ENCODE measurements at regions of chr5 and their contacts with region 1.

Region 1: DNA sequence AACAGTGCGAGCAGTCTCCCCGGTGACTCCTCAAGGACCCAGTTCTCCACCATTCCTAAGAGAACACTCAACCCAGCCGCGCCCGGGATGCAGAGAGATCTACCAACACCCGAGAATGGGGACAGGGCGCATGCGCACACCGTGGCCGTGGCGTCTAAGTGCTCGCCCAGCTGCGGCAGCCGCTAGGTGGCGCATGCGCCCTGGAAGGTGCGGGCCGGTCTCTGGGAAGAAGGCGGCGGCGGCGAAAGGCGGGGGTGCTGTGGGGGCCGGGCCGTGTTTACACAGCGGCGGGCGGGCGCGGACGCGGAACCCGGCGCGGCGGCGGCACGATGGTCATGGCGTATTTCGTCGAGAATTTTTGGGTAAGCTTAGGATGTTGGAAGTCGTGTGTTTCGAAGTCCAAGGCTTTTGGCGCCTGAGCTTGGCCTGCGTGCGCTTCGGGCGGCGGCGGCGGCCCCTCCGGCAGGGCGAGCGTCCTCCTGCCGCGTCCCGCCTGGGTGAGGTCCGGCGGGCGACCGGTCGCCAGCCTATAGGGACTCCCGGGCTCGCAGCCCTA is at the start of gene FCHO2:
- DNase-seq: peak; percentile 82 to 98 (median 91)
- ATAC-seq: peak; percentile 98
- H3K4me3 ChIP-seq: peak within 1 kb of the TSS; percentile 85
- H3K4me3 Mint-ChIP-seq: peak within 1 kb of the TSS; percentile 90 to 95 (median 94)
- H3K27ac ChIP-seq: no peak within 1 kb of the TSS
- H3K27ac Mint-ChIP-seq: peak within 1 kb of the TSS; percentile 22 to 92 (median 80)
- H3K4me1 ChIP-seq: peaks cover 5 to 12% of the 10 kb centered on the region in 2 donors
- H3K4me1 Mint-ChIP-seq: peaks cover 10 to 19% (median 13%) of the 10 kb centered on the region in 7 donors
- H3K27me3 ChIP-seq: peaks cover 3 to 4% of the 10 kb centered on the region in 2 donors
- H3K27me3 Mint-ChIP-seq: peaks cover 43 to 69% (median 55%) of the 10 kb centered on the region in 5 donors
- total RNA-seq, gene FCHO2: 1.7 to 7.1 (median 3.0) TPM

Region 2: DNA sequence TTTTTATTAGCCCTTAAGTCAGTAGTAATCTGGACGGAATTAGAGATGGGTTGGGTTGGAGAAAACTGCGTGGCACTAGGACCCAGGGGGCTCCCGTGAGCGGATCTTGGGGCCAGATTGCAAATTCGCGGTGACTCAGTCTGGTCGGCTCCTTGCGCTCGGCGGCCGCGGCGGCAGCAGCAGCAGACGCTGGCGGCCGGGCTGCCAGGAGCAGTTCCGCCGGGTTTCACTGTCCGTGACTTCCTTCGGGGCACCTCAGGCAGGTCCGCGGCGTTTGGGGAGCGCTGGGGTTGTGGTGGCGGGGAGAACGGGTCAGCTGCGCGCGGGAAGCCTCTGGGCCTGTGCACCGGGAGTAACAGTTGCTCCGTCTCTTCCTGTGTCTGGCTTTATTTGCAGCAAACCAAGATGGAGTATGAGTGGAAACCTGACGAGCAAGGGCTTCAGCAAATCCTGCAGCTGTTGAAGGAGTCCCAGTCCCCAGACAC is 107.8 kb before region 1 on chr5:
- CTCF ChIA-PET with region 1: no interaction called
- POLR2A ChIA-PET with region 1: interaction called, 4 read pairs
- intact Hi-C with region 1: loop called (anchors 1 to 2 kb)
- DNase-seq: peak; percentile 67 to 86 (median 83)
- ATAC-seq: peak; percentile 94
- H3K4me3 ChIP-seq: peak overlapping the region; percentile 93
- H3K4me3 Mint-ChIP-seq: peak overlapping the region; percentile 92 to 99 (median 98)
- H3K27ac ChIP-seq: peak overlapping the region; percentile 86
- H3K27ac Mint-ChIP-seq: peak overlapping the region; percentile 93 to 98 (median 96)
- H3K4me1 ChIP-seq: peaks cover 24 to 31% of the 10 kb centered on the region in 2 donors
- H3K4me1 Mint-ChIP-seq: peaks cover 30 to 88% (median 64%) of the 10 kb centered on the region in 7 donors
- H3K27me3 ChIP-seq: no peaks in the 10 kb centered on the region
- H3K27me3 Mint-ChIP-seq: peaks cover 0 to 16% (median 0%) of the 10 kb centered on the region in 5 donors

Region 3: GRCh38 chr5:73201547-73202513 is 246.0 kb after region 1 on chr5:
- CTCF ChIA-PET with region 1: no interaction called
- POLR2A ChIA-PET with region 1: no interaction called
- intact Hi-C with region 1: loop called (anchors 1 kb)
- DNase-seq: peak; percentile 32 to 72 (median 59)
- ATAC-seq: peak; percentile 84
- H3K4me3 ChIP-seq: no peak overlapping the region
- H3K4me3 Mint-ChIP-seq: peak overlapping the region in 5 of 10 donors; percentile 29 to 62 (median 51)
- H3K27ac ChIP-seq: no peak overlapping the region
- H3K27ac Mint-ChIP-seq: peak overlapping the region in 1 of 9 donors; percentile 15
- H3K4me1 ChIP-seq: no peaks in the 10 kb centered on the region
- H3K4me1 Mint-ChIP-seq: peaks cover 0 to 5% (median 3%) of the 10 kb centered on the region in 7 donors
- H3K27me3 ChIP-seq: peaks cover 0 to 11% of the 10 kb centered on the region in 2 donors
- H3K27me3 Mint-ChIP-seq: peaks cover 42 to 76% (median 63%) of the 10 kb centered on the region in 5 donors

Region 4: DNA sequence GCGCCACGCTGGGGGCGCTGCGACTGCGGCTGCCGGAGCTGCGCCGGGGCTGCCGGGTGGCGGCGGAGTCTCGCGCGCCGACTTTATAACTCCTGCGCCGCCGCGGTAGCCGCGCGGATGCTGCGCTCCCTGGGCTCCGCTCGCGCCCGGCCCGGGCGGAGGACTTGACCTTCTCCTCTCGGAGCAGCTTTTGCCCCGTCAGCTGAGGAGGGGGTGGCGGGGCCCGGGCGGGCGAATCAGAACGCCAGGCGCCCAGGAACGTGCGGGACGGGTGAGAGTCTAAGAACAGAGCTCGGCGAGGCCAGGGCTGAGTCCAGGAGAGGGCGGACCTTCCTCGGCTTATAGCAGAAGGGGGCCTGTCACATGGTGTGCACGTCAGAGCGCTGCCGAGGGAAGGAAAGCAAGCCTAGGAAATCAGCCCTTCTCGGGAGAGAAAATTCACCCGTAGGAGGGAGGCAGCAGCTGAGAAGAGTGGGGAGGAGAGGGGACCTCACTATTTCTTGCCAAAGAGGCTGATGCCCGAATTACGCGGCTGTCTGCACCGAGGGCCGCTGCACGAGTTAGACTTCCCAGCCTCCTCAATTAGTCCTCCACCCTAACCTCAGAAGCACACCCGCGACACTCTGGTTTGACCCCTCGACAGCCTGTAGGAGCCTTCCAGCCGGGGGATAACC is 492.8 kb after region 1 on chr5 and contains the start of gene FOXD1:
- CTCF ChIA-PET with region 1: no interaction called
- POLR2A ChIA-PET with region 1: no interaction called
- intact Hi-C with region 1: loop called (anchors 2 to 5 kb)
- DNase-seq: peak in 2 of 9 donors; percentile 27 to 30
- ATAC-seq: peak; percentile 49
- H3K4me3 ChIP-seq: peak within 1 kb of the TSS; percentile 39
- H3K4me3 Mint-ChIP-seq: peak within 1 kb of the TSS; percentile 85 to 90 (median 87)
- H3K27ac ChIP-seq: no peak within 1 kb of the TSS
- H3K27ac Mint-ChIP-seq: peak within 1 kb of the TSS in 8 of 9 donors; percentile 33 to 88 (median 69)
- H3K4me1 ChIP-seq: peaks cover 11 to 14% of the 10 kb centered on the region in 2 donors
- H3K4me1 Mint-ChIP-seq: peaks cover 0 to 29% (median 21%) of the 10 kb centered on the region in 7 donors
- H3K27me3 ChIP-seq: peaks cover 66 to 75% of the 10 kb centered on the region in 2 donors
- H3K27me3 Mint-ChIP-seq: peaks cover 70 to 83% (median 74%) of the 10 kb centered on the region in 5 donors
- total RNA-seq, gene FOXD1: 0.16 to 0.32 TPM in 2 of 5 experiments, not detected in the others

Region 5: DNA sequence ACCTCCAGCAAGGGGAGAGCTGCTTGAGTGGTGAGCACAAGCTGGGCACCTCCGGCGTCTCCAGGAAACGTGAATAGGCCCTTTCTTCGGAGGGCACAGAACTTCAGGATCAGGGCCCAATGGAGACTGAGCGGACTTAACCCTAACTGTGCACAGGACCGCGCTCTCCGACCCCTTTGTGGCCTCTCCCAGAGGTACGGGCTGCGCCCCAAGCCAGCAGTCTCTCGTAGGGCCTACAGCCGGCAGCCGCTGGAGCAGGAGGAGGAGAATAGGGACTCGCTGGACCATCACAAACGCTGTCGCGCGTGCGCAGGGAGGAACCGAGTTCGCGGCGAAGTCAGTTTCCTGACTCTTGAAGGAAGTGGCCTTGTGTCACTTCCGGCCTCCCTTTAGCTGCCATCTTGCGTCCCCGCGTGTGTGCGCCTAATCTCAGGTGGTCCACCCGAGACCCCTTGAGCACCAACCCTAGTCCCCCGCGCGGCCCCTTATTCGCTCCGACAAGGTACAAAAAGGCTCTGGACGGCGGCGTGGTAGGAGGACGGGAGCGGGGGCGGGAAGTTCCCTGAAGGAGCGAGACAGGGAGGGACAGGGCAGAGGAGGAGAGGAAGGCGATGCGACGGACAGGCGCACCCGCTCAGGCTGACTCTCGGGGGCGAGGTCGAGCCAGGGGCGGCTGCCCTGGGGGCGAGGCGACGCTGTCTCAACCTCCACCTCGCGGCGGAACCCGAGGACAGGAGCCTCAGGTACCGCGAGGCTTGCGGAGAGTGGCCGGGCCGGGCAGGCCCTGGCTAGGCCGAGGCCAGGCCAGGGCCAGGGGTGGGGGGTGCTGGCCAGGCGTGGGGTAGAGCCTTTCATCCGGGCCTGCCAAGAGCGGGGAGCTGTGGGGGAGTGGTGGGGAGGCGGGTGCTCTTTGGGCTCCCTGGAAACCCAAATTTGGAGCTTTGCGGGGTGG is 542.5 kb after region 1 on chr5 and contains the start of gene BTF3:
- CTCF ChIA-PET with region 1: no interaction called
- POLR2A ChIA-PET with region 1: no interaction called
- intact Hi-C with region 1: loop called (anchors 1 to 10 kb)
- DNase-seq: peak; percentile 83 to 94 (median 91)
- ATAC-seq: peak; percentile 96
- H3K4me3 ChIP-seq: peak within 1 kb of the TSS; percentile 81
- H3K4me3 Mint-ChIP-seq: peak within 1 kb of the TSS; percentile 92 to 99 (median 97)
- H3K27ac ChIP-seq: peak within 1 kb of the TSS; percentile 93
- H3K27ac Mint-ChIP-seq: peak within 1 kb of the TSS; percentile 97 to 100 (median 99)
- H3K4me1 ChIP-seq: peaks cover 22 to 31% of the 10 kb centered on the region in 2 donors
- H3K4me1 Mint-ChIP-seq: peaks cover 26 to 57% (median 41%) of the 10 kb centered on the region in 7 donors
- H3K27me3 ChIP-seq: peaks cover 0 to 4% of the 10 kb centered on the region in 2 donors
- H3K27me3 Mint-ChIP-seq: peaks cover 4 to 15% (median 13%) of the 10 kb centered on the region in 5 donors
- total RNA-seq, gene BTF3: 557 to 758 (median 700) TPM